ENCODE measurements at regions of chr1 and their contacts with region 1.

Region 1: DNA sequence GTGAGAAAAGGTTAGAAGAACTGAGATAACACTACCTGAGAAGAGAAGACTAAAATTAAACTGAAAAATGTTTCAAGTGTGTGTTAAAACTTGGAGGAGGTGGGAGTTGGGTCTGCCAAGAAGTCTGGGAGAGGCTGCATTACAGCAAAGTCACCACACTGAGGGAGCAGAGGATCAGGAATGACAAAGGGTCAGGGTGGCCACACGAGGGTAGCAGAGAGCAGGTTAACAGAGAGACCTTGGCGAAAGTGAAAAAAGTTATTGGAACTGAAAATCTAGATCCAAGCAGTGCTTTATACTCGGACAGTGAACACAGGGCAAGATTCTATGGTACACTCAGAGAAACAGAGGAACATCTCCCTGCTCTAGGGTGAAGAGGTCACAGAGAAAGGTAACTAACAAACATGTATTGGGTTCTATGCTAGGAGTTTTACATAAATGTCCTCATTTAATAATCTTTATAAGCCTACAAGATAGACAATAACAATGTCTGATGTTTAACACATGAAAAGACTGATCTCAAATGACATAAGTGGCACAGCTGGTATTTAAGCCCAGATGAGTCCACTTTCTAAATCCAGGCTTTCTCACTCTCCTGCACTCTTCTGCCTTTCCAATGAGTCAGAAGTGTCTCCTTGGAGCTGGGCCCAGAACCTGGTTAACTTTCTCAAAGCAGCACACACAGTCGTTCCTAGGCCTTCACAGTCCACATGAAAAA is 10.3 kb upstream of the CADM3 start:
- DNase-seq: peak; percentile 80
- H3K4me3 Mint-ChIP-seq: no peak overlapping the region
- H3K27ac Mint-ChIP-seq: no peak overlapping the region
- H3K4me1 Mint-ChIP-seq: no peaks in the 10 kb centered on the region
- H3K27me3 Mint-ChIP-seq: peaks cover 43% of the 10 kb centered on the region

Region 2: DNA sequence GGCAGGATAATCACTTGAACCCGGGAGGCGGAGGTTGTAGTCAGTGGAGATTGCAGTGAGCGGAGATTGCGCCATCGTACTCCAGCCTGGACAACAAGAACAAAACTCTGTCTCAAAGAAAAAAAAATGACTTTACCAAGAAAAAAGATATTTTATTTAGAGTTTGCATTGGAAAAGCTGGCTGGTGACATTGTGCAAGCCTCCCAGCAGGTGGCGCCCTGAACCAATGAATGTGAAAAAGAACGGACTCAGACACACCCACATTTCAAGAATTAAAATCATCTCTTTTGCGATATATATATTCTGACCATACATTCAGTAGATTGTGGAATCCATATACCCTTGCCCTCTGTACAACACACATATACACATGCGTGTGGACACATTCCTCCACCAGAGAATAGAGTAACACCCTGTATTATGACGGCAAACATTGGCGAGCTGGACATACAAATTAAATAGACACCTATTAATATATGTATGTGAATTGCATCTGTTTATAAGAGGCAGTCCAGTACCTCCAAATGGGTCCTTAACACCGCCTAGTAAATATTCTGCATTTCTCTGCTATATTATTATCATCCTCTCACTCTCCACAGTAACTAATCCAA is 28.8 kb before region 1 on chr1:
- CTCF ChIA-PET with region 1: interaction called, 23 read pairs
- intact Hi-C with region 1: loop called (anchors 1 kb)
- DNase-seq: peak; percentile 84
- H3K4me3 Mint-ChIP-seq: no peak overlapping the region
- H3K27ac Mint-ChIP-seq: no peak overlapping the region
- H3K4me1 Mint-ChIP-seq: no peaks in the 10 kb centered on the region
- H3K27me3 Mint-ChIP-seq: peaks cover 6% of the 10 kb centered on the region

Region 3: GRCh38 chr1:159632922-159633321 is 471.8 kb after region 1 on chr1:
- CTCF ChIA-PET with region 1: no interaction called
- intact Hi-C with region 1: no loop called
- DNase-seq: no peak
- H3K4me3 Mint-ChIP-seq: no peak overlapping the region
- H3K27ac Mint-ChIP-seq: no peak overlapping the region
- H3K4me1 Mint-ChIP-seq: no peaks in the 10 kb centered on the region
- H3K27me3 Mint-ChIP-seq: peaks cover 16% of the 10 kb centered on the region